ENCODE measurements at regions of chr11 and their contacts with region 1.

Region 1: DNA sequence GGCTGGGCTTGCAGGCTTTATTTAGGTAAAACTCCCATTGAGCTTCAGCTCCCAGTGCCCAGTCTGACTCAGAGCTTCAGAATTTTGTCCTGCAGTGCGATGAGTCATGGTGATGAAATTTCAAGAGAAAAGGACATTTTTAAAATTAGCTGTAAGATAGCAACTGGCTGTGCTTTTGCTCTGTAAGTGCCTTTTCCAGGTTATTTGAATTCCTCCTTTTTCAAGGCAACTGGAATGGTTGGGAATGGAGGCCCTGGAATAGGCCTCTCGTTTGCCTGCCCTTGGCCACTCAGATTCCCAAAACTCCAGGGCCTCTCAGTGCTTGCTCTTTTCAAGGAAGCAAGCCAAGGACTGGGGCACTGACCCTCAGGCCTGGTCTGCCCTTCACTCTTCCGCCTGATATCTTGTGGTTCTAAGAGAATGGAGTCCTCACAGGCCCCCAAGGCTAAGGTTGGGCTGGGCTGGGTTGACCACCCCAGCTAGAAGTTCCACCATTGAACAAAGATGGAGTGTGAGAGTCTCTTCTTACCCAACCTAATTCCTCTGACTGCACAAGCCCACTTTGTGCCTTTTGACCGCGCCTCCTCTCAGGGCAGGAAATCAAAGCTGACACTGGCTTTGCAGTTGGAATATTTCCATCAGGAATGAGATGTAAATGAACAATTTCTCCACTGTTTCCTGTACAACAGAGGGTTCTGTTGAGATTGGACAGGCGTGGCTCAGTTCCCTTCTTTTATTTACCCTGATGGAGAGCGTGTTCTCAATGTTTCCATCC is 59.4 kb upstream of the PRSS23 start:
- DNase-seq: peak; percentile 98
- ATAC-seq: peak; percentile 58
- H3K4me3 ChIP-seq: no peak overlapping the region
- H3K27ac ChIP-seq: peak overlapping the region; percentile 97
- H3K4me1 ChIP-seq: peaks cover 37% of the 10 kb centered on the region
- H3K27me3 ChIP-seq: no peaks in the 10 kb centered on the region
- CTCF ChIP-seq: no peak
- POLR2A ChIP-seq: 0 out of 2 replicates have a peak, but pooled peaks have one; percentile 2
- RAD21 ChIP-seq: no peak

Region 2: GRCh38 chr11:86632499-86633269 is 108.2 kb before region 1 on chr11:
- CTCF ChIA-PET with region 1: interaction called, 3 read pairs
- POLR2A ChIA-PET with region 1: no interaction called
- dilution Hi-C with region 1: no loop called
- in situ Hi-C with region 1: no loop called
- intact Hi-C with region 1: loop called (anchors 5 kb)
- DNase-seq: peak; percentile 99
- ATAC-seq: peak; percentile 93
- H3K4me3 ChIP-seq: no peak overlapping the region
- H3K27ac ChIP-seq: peak overlapping the region; percentile 47
- H3K4me1 ChIP-seq: peaks cover 25% of the 10 kb centered on the region
- H3K27me3 ChIP-seq: no peaks in the 10 kb centered on the region
- CTCF ChIP-seq: no peak; the same call in 1 of the 2 replicates
- POLR2A ChIP-seq: peak; percentile 37; the same call in 1 of the 2 replicates
- RAD21 ChIP-seq: peak; percentile 47

Region 3: GRCh38 chr11:86688398-86689179 is 52.3 kb before region 1 on chr11:
- CTCF ChIA-PET with region 1: no interaction called
- POLR2A ChIA-PET with region 1: no interaction called
- dilution Hi-C with region 1: no loop called
- in situ Hi-C with region 1: no loop called
- intact Hi-C with region 1: loop called (anchors 1 kb)
- DNase-seq: peak; percentile 91
- ATAC-seq: peak; percentile 95
- H3K4me3 ChIP-seq: no peak overlapping the region
- H3K27ac ChIP-seq: peak overlapping the region; percentile 27
- H3K4me1 ChIP-seq: peaks cover 13% of the 10 kb centered on the region
- H3K27me3 ChIP-seq: no peaks in the 10 kb centered on the region
- CTCF ChIP-seq: no peak
- POLR2A ChIP-seq: no peak
- RAD21 ChIP-seq: 0 out of 2 replicates have a peak, but pooled peaks have one; percentile 17

Region 4: DNA sequence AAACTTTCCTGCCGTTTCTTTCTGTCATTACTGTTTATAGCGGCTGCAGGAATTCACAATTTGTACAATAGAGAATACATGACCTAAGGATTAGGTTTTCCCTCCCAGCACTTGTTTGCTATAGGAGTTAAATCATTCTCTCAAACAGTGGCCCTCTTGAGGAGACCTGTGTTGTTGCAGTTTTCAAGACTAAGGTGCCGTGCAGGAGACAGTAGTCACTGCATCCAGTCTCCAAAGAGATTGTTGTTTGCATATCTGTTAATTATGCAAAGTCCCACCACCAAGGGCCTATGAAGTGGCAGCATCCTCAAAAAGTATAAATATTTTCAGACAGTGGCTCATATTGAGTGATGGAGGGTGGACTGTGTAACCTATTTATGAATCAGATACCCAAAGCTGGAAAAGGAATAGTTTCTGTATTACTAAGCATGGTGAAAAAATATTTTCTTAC is 61.7 kb after region 1 on chr11:
- CTCF ChIA-PET with region 1: interaction called, 3 read pairs
- POLR2A ChIA-PET with region 1: no interaction called
- dilution Hi-C with region 1: no loop called
- in situ Hi-C with region 1: no loop called
- intact Hi-C with region 1: loop called (anchors 2 kb)
- DNase-seq: peak; percentile 57
- ATAC-seq: peak; percentile 15; the same call in 1 of the 2 replicates
- H3K4me3 ChIP-seq: peak overlapping the region; percentile 82; the same call in 1 of the 2 replicates
- H3K27ac ChIP-seq: no peak overlapping the region
- H3K4me1 ChIP-seq: peaks cover 22% of the 10 kb centered on the region
- H3K27me3 ChIP-seq: no peaks in the 10 kb centered on the region
- CTCF ChIP-seq: peak; percentile 45
- POLR2A ChIP-seq: no peak
- RAD21 ChIP-seq: peak; percentile 42